Right lobe of liver (tissue), 6 donors: ENCODE measurements at regions of chrX and their contacts with region 1.

Region 1: DNA sequence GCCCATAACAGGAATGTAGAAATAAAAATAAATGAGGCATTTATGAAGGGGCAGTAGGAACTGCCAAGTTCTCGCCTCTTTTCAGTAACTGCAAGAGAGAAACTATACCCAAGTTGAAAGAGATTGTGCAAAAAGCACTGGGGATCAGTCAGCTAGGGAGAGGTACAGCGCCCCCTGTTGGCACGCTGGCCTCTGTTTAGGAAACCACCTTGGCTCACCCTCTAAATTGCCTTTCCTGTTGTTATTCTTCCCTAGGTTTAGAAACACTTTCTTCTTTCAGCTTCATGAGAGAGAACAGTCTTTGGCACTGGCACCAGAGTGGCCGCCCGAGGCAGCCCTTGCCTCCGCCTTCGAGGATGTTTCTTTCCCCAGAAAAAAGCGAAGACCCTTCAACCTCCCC is 348.5 kb downstream of the MID1IP1 start:
- DNase-seq: peak; percentile 52 to 69 (median 65)
- ATAC-seq: peak; percentile 76 to 93 (median 81)
- H3K4me3 ChIP-seq: no peak overlapping the region
- H3K27ac ChIP-seq: no peak overlapping the region
- H3K4me1 ChIP-seq: no peaks in the 10 kb centered on the region
- H3K27me3 ChIP-seq: peaks cover 0 to 4% of the 10 kb centered on the region in 2 donors
- CTCF ChIP-seq: peak; percentile 64 to 83 (median 76)
- POLR2A ChIP-seq: no peak

Region 2: DNA sequence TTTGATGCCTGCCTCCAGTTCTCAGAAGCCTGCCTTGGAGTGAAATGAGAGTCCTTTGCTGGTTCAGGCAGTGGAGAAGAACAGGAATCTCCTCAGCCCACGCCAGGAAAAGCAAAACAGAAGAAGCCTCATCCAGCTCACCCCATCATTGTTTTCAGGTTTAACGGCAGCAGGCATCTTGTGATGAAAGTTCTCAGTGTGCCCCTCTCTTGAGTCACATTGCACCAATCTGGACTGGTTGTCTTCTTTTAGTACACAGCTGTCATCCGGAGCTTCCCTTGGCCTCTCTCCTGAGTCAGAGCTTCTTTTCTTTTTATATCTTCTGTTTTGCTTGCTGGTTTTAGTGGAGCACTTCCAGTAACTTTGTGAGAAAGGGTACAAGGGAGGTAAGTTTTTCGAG is 537.5 kb before region 1 on chrX:
- intact Hi-C with region 1: no loop called
- DNase-seq: no peak
- ATAC-seq: no peak
- H3K4me3 ChIP-seq: no peak overlapping the region
- H3K27ac ChIP-seq: no peak overlapping the region
- H3K4me1 ChIP-seq: no peaks in the 10 kb centered on the region
- H3K27me3 ChIP-seq: no peaks in the 10 kb centered on the region
- CTCF ChIP-seq: no peak
- POLR2A ChIP-seq: no peak

Region 3: DNA sequence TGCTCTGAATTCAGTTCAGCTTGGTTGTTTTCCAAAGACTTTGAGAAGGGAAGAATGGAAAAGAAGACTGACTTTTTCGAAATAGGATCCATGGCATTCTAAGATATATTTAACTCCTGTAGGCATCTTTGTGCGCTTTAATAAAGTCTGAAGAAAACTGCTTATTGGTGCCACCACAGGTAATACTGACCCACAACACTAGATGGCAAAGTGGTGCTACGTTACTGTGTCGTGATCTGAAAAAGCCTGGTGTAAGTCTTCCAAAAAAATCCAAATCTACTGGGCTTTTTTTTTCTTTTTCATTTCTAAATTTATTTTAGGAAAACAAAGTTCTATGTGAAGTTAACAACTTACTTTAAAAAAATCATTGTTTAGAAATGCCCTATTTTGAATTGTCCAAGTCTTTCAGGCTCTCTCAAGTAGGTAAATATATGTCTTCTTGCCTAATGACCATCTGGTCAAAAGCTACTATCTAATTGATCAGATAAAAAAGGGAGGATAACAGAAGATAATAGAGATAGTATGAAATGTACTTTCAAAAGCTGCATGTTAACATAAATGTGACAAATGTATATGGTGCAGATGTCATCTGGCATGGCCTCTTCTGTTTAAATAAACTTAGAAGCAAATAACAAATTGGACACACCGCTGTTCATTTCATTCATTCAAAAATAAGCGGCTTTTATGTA is 395.5 kb before region 1 on chrX:
- intact Hi-C with region 1: loop called in 1 of 2 experiments (anchors 10 kb)
- DNase-seq: no peak
- ATAC-seq: peak; percentile 74 to 87 (median 84)
- H3K4me3 ChIP-seq: no peak overlapping the region
- H3K27ac ChIP-seq: no peak overlapping the region
- H3K4me1 ChIP-seq: no peaks in the 10 kb centered on the region
- H3K27me3 ChIP-seq: no peaks in the 10 kb centered on the region
- CTCF ChIP-seq: peak; percentile 69 to 82 (median 72)
- POLR2A ChIP-seq: no peak

Region 4: DNA sequence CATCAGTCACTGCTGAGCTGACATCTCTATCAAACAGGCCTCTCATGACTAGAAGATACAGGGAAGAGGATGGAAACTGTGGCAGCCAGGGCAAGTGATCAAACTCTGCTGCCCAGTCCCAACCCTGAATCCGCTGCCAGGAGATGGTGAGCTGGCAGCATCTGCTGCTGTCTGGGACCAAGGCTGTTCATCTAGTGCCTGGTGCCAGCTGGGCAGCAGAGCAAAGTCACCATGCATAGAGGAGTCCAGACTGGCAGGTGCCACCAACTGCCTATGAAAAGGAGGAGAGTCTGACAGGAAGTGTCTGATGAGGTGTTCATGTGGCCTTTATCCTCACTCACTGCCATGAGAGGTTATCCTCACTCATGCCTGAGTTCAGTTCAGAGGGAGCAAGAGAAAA is 170.4 kb after region 1 on chrX:
- intact Hi-C with region 1: no loop called
- DNase-seq: no peak
- ATAC-seq: no peak
- H3K4me3 ChIP-seq: no peak overlapping the region
- H3K27ac ChIP-seq: no peak overlapping the region
- H3K4me1 ChIP-seq: no peaks in the 10 kb centered on the region
- H3K27me3 ChIP-seq: no peaks in the 10 kb centered on the region
- CTCF ChIP-seq: no peak
- POLR2A ChIP-seq: no peak